Heart left ventricle (tissue), 16 donors: ENCODE measurements at regions of chr5 and their contacts with region 1.

Region 1: DNA sequence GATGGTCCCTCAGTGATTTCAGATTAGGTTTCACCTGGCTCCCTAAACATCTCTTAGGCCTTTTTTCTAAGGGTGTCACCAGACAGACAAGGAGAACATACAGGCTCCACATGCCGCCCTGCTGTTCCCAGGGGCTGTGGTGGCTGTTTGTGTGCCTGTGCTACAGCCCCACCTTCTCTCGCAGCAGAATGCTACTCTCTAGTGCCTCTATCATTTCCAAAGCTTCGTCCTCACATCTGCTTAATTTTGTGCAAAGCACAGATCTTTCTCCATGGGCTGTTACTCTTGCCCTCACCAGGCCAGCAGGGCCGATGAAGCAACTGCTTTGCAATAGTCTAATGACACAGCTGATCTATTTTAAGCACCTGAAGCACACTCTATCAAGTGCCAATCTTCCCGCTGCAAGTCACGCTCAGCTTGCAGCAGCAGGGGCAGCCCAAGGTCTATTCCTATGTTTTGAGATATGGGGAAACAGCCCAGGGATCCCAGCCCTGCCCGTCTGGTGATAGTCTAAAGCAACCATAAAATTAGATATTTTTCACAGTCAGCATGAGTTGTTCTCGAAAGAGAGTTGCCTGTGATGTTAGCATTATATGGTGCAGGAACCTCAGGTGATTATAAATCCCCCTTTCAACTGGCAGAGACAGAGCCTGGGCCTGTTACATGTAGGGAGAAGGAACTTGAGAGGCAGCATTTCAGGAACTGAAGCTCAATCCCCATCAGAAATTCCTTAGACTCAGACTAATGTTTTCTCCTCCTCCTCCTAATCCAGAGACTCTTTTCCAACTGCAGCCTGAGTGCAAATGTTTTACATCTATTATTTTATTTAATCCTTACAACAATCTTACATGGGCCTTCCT is 12.7 kb downstream of the ABLIM3 start:
- DNase-seq: peak in 4 of 5 donors; percentile 60 to 85 (median 76)
- ATAC-seq: peak; percentile 75 to 91 (median 82)
- H3K4me3 ChIP-seq: no peak overlapping the region
- H3K27ac ChIP-seq: peak overlapping the region; percentile 77 to 96 (median 87)
- H3K4me1 ChIP-seq: peaks cover 16 to 99% (median 89%) of the 10 kb centered on the region in 12 donors
- H3K27me3 ChIP-seq: no peaks in the 10 kb centered on the region
- CTCF ChIP-seq: no peak
- POLR2A ChIP-seq: no peak

Region 2: GRCh38 chr5:148957591-148958202 is 196.3 kb before region 1 on chr5:
- intact Hi-C with region 1: no loop called
- DNase-seq: peak in 3 of 5 donors; percentile 20 to 47 (median 29)
- ATAC-seq: peak in 2 of 4 donors; percentile 43 to 53
- H3K4me3 ChIP-seq: no peak overlapping the region
- H3K27ac ChIP-seq: no peak overlapping the region
- H3K4me1 ChIP-seq: peaks cover 0 to 12% (median 0%) of the 10 kb centered on the region in 12 donors
- H3K27me3 ChIP-seq: no peaks in the 10 kb centered on the region
- CTCF ChIP-seq: peak; percentile 69 to 88 (median 80)
- POLR2A ChIP-seq: no peak

Region 3: GRCh38 chr5:149181732-149182131 is 27.8 kb after region 1 on chr5:
- intact Hi-C with region 1: loop called in 1 of 10 experiments (anchors 5 kb)
- DNase-seq: no peak
- ATAC-seq: no peak
- H3K4me3 ChIP-seq: no peak overlapping the region
- H3K27ac ChIP-seq: no peak overlapping the region
- H3K4me1 ChIP-seq: peaks cover 7 to 73% (median 29%) of the 10 kb centered on the region in 12 donors
- H3K27me3 ChIP-seq: no peaks in the 10 kb centered on the region
- CTCF ChIP-seq: no peak
- POLR2A ChIP-seq: no peak

Region 4: GRCh38 chr5:149195337-149195887 is 41.4 kb after region 1 on chr5:
- intact Hi-C with region 1: loop called in 1 of 10 experiments (anchors 5 kb)
- DNase-seq: peak; percentile 50 to 68 (median 62)
- ATAC-seq: peak; percentile 85 to 90 (median 88)
- H3K4me3 ChIP-seq: no peak overlapping the region
- H3K27ac ChIP-seq: peak overlapping the region; percentile 47 to 86 (median 83)
- H3K4me1 ChIP-seq: peaks cover 3 to 53% (median 28%) of the 10 kb centered on the region in 12 donors
- H3K27me3 ChIP-seq: no peaks in the 10 kb centered on the region
- CTCF ChIP-seq: no peak
- POLR2A ChIP-seq: no peak

Region 5: GRCh38 chr5:149215478-149216090 is 61.6 kb after region 1 on chr5:
- intact Hi-C with region 1: loop called in 1 of 10 experiments (anchors 5 kb)
- DNase-seq: peak in 4 of 5 donors; percentile 40 to 72 (median 66)
- ATAC-seq: peak in 2 of 4 donors; percentile 10 to 24
- H3K4me3 ChIP-seq: no peak overlapping the region
- H3K27ac ChIP-seq: peak overlapping the region in 9 of 12 donors; percentile 13 to 74 (median 47)
- H3K4me1 ChIP-seq: peaks cover 0 to 64% (median 44%) of the 10 kb centered on the region in 12 donors
- H3K27me3 ChIP-seq: no peaks in the 10 kb centered on the region
- CTCF ChIP-seq: no peak
- POLR2A ChIP-seq: no peak

Region 6: DNA sequence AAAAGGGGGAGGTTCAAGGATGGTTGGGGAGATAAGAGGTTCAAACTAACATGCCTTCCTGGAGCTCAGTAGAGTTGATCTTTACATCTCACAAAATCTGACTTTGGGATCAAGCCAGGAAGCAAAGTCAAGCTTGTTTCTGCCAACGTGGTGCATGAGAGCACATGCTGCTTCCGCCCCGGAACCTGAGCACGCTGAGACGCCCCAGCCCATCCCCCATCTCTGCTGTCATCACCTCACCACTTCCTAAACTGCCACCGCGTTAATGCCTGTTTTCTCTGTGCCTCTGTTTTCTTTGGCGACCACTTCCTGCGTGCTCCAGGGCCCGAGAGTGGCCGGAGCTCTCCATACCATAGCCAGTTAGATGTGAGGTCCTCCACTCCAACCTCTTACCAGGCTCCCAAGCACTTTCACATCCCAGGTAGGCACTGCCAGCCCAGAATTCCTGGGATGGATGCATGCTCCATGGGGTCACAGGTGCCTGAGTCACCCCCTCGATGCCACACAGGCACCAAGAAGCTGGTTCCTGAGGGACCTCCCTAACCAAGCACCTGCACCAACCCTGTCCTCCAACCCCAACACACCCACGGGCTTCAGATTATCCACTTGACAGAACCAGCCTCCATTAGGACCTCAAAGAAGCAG is 86.5 kb after region 1 on chr5:
- intact Hi-C with region 1: no loop called
- DNase-seq: peak in 2 of 5 donors; percentile 34 to 68
- ATAC-seq: no peak
- H3K4me3 ChIP-seq: no peak overlapping the region
- H3K27ac ChIP-seq: peak overlapping the region in 1 of 12 donors; percentile 24
- H3K4me1 ChIP-seq: peaks cover 0 to 17% (median 3%) of the 10 kb centered on the region in 12 donors
- H3K27me3 ChIP-seq: no peaks in the 10 kb centered on the region
- CTCF ChIP-seq: no peak
- POLR2A ChIP-seq: no peak